Tibial artery (tissue), 4 donors: ENCODE measurements at regions of chr17 and their contacts with region 1.

Region 1: GRCh38 chr17:64150237-64151015 is 20.5 kb upstream of the ERN1 start:
- DNase-seq: peak; percentile 68 to 76
- H3K4me3 ChIP-seq: no peak overlapping the region
- H3K27ac ChIP-seq: peak overlapping the region; percentile 32 to 43
- H3K4me1 ChIP-seq: peaks cover 0 to 32% (median 25%) of the 10 kb centered on the region in 4 donors
- H3K27me3 ChIP-seq: no peaks in the 10 kb centered on the region
- CTCF ChIP-seq: no peak

Region 2: GRCh38 chr17:64262417-64263260 is 112.2 kb after region 1 on chr17 and contains the start of gene TEX2:
- intact Hi-C with region 1: loop called (anchors 5 kb)
- DNase-seq: peak; percentile 39 to 74
- H3K4me3 ChIP-seq: peak within 1 kb of the TSS; percentile 94 to 99
- H3K27ac ChIP-seq: peak within 1 kb of the TSS; percentile 93 to 98
- H3K4me1 ChIP-seq: peaks cover 0 to 43% (median 26%) of the 10 kb centered on the region in 4 donors
- H3K27me3 ChIP-seq: peaks cover 0 to 5% of the 10 kb centered on the region in 2 donors
- CTCF ChIP-seq: no peak